Calu3 (cell line): ENCODE measurements at regions of chr6 and their contacts with region 1.

Region 1: DNA sequence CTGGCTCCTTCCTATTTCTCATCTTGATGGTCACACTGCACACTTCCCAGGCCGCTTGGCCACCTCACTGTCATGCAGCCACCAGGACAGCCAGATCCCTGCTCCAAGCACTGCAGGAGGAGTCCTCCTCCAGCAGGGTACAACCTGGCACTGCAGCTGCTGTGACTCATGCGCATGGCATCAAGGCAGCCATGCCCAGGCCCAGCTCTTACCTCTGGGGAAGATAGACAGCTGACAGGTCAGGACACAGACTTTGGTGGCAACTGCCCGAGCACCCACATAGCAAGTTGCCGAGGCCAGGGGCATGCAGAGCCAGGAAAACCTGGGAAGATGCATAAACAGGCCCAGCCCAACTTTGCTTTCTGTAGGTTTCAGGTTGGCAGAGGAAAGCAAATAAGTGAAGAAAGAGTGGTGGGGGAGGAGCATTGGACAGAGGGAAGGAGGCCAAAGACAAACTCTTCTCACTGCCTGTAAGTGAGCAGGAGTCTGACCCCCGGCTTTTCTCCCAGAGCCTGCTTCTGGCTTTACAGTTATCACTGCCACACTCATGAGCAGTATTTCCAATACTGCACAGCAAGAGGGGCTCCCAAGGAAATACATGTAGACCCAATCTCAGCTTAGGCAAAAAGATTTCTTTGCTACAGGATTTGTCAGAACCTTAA is 38.8 kb downstream of the SLC22A3 start:
- DNase-seq: peak; percentile 77
- H3K4me3 Mint-ChIP-seq: peak overlapping the region; percentile 2
- H3K27ac Mint-ChIP-seq: no peak overlapping the region
- H3K4me1 Mint-ChIP-seq: peaks cover 55% of the 10 kb centered on the region
- H3K27me3 Mint-ChIP-seq: no peaks in the 10 kb centered on the region
- CTCF ChIP-seq: peak; percentile 52

Region 2: GRCh38 chr6:160238751-160239402 is 148.1 kb before region 1 on chr6:
- CTCF ChIA-PET with region 1: no interaction called
- intact Hi-C with region 1: loop called (anchors 5 kb)
- DNase-seq: no peak
- H3K4me3 Mint-ChIP-seq: no peak overlapping the region
- H3K27ac Mint-ChIP-seq: peak overlapping the region; percentile 91
- H3K4me1 Mint-ChIP-seq: peaks cover 34% of the 10 kb centered on the region
- H3K27me3 Mint-ChIP-seq: no peaks in the 10 kb centered on the region
- CTCF ChIP-seq: no peak

Region 3: DNA sequence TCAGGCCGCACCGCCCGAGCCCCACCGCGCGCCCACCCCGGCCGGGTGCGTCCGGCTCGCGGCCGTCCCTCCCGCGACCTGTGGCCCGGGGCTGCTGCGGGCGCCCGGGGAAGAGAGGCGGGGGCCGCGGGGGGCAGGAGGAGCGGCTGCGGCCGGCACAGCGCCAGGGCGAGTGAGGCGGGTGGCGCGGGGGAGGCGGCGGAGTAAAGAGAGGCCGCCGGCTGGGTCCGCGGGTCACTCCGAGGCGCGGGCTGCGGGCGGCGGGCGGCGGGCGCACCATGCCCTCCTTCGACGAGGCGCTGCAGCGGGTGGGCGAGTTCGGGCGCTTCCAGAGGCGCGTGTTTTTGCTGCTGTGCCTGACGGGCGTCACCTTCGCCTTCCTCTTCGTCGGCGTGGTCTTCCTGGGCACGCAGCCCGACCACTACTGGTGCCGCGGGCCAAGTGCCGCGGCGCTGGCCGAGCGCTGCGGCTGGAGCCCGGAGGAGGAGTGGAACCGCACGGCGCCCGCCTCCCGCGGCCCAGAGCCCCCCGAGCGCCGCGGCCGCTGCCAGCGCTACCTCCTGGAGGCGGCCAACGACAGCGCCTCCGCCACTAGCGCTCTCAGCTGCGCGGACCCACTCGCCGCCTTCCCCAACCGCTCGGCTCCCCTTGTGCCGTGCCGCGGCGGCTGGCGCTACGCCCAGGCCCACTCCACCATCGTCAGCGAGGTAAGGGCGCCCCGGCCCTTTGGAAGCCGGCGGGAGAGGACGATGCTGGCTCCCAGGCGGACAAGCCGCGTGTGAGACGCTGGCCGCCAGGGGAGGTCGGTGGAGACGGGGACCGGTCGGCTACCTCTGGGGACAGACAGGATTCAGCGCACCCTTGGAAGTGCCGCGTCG is 38.6 kb before region 1 on chr6 and contains the start of gene SLC22A3:
- CTCF ChIA-PET with region 1: no interaction called
- intact Hi-C with region 1: loop called (anchors 5 kb)
- DNase-seq: peak; percentile 58
- H3K4me3 Mint-ChIP-seq: peak within 1 kb of the TSS; percentile 83
- H3K27ac Mint-ChIP-seq: peak within 1 kb of the TSS; percentile 73
- H3K4me1 Mint-ChIP-seq: peaks cover 16% of the 10 kb centered on the region
- H3K27me3 Mint-ChIP-seq: no peaks in the 10 kb centered on the region
- CTCF ChIP-seq: no peak
- total RNA-seq, gene SLC22A3: 3.3 and 8.1 TPM in 2 replicates